Right ventricle myocardium inferior (tissue), 1 donor: ENCODE measurements at regions of chr1 and their contacts with region 1.

Region 1: GRCh38 chr1:31669786-31670592 is 25.3 kb upstream of the PEF1 start:
- DNase-seq: peak; percentile 72
- ATAC-seq: peak; percentile 70

Region 2: GRCh38 chr1:31523769-31524168 is 146.2 kb before region 1 on chr1:
- intact Hi-C with region 1: no loop called
- DNase-seq: no peak
- ATAC-seq: no peak

Region 3: DNA sequence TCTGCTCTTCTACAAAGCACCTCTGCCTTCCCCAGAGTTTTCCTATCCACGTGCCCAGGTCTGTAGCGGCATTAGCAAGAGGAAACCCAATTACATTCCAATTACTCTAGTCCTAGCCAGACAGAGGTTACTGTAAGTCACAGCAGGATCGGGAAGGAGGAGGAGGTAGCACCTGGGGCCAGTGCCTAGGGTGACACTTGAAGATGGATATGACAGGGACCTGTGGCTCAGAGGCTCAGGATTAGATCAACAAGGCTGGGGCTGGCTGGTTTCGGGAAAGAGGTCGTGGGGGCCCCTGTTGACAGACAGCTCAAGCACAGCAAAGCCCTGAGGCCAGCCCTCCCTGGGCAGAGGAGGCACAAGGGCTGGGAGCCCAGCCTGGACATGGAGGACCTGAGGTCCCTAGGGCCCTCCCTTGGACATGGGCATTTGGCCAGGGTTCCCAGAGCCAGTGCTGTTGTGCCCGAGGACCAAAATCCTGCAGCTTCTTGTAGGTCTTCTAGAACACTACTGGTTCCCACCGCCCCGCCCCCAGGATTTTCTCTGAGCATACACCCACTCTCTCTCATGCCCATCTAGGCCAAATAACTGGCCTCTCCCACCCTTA is 55.5 kb before region 1 on chr1:
- intact Hi-C with region 1: no loop called
- DNase-seq: no peak
- ATAC-seq: no peak

Region 4: DNA sequence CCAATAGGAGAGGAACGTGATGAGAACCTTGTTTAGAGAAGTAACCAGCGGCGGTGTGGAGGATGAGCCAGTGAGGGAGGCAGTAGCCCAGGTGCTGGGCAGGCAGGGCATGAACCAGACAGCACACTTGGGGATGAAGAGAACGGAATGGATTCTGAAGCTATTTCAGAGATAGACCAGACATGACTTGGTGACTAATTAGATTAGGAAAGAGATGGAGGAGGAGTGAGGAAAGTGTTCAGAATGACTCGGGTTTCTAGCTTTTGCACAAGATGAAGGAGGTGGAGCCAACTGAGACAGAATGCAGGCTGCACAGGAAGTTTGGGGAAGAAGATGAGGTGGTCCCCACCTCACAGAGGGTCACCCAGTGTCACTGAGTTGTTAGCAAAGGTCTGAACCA is 30.4 kb before region 1 on chr1:
- intact Hi-C with region 1: no loop called
- DNase-seq: no peak
- ATAC-seq: no peak

Region 5: DNA sequence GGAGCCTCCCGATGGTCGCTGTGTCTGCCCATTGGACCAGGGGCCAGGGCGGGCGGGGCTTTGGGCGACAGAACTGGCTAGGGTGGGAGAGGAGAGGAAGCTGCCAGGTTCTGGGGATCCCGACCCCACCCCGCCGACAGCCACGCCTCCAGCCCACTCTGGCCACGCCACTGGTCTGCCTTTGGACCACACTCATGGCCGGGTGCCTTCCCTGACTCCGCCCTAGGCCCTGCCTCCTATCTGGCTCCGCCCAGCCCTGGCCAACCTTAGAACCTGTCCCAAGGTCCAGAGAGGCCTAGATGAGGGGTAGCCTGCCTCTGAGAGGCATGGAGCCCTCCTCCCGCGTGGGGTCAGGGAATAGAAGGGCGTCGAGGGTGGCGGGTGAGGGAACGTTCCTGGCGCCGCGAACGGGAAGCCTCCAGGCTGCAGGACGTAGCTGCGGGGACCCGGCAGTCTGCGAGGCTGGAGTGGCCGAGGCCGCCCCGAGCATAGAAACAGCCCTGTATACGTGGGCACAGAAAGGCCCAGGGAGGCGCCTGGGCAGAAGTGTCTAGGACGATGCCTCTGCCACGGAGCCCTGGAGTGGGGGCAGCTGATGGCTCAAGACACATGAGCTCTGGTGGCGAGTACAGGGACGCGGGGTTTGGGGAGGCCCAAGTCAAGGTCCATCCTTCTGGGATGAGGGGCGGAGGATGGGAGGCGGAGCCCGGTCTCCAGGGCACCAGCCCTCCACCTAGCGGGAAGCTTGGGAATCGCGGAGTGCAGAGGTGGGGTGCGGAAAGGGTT is 45.3 kb after region 1 on chr1:
- intact Hi-C with region 1: loop called (anchors 1 kb)
- DNase-seq: peak; percentile 95
- ATAC-seq: peak; percentile 97

Region 6: GRCh38 chr1:31762726-31763670 is 93.0 kb after region 1 on chr1:
- intact Hi-C with region 1: loop called (anchors 5 kb)
- DNase-seq: peak; percentile 84
- ATAC-seq: peak; percentile 47

Region 7: DNA sequence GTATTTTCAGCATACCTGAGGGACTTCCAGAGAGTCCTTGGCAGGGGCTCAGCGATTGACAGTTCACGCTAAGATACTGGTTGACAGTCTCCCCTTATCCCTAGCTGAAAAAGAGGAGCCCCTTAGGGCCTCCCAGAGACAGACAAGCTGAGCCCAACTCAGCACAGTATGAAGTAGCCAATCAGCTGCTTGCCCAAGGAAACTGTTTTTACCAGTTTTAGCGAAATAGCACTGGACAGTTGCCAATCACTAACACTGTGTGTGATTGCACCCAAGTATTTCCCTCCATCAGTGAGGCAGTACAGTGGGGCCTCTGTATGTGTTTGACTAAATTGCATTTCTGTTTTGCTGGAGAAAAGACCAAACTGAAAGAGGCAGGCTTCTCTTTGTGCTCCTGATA is 370.7 kb after region 1 on chr1:
- intact Hi-C with region 1: no loop called
- DNase-seq: no peak
- ATAC-seq: peak; percentile 28